ENCODE measurements at regions of chr6 and their contacts with region 1.

Region 1: GRCh38 chr6:108052706-108053105 is 21.8 kb downstream of the OSTM1 start:
- DNase-seq: no peak
- ATAC-seq: no peak
- H3K4me3 Mint-ChIP-seq: no peak overlapping the region
- H3K27ac Mint-ChIP-seq: no peak overlapping the region
- H3K4me1 Mint-ChIP-seq: no peaks in the 10 kb centered on the region
- H3K27me3 Mint-ChIP-seq: no peaks in the 10 kb centered on the region
- CTCF ChIP-seq: no peak

Region 2: DNA sequence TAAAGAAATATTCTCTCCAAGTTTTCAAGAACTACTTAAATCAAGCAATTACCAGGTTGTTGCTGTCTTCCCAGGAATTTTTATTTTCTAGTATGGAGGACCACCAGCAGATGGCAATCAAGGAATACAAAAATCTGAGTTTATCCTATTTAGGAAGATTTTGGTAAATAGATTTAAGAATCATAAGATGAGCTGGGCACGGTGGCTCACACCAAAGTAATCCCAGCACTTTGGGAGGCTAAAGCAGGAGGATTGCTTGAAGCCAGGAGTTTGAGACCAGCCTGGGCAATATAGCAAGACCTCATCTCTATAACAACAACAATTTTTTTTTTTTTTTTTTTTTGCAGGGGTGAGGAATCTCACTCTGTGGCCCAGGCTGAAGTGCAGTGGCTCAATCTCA is 75.4 kb before region 1 on chr6:
- CTCF ChIA-PET with region 1: interaction called, 83 read pairs
- POLR2A ChIA-PET with region 1: no interaction called
- DNase-seq: no peak
- ATAC-seq: no peak
- H3K4me3 Mint-ChIP-seq: no peak overlapping the region
- H3K27ac Mint-ChIP-seq: no peak overlapping the region
- H3K4me1 Mint-ChIP-seq: peaks cover 13% of the 10 kb centered on the region
- H3K27me3 Mint-ChIP-seq: peaks cover 13% of the 10 kb centered on the region
- CTCF ChIP-seq: no peak; the same call in 1 of the 2 replicates

Region 3: GRCh38 chr6:107982486-107982885 is 70.2 kb before region 1 on chr6:
- CTCF ChIA-PET with region 1: interaction called, 83 read pairs
- POLR2A ChIA-PET with region 1: no interaction called
- DNase-seq: no peak
- ATAC-seq: no peak
- H3K4me3 Mint-ChIP-seq: no peak overlapping the region
- H3K27ac Mint-ChIP-seq: no peak overlapping the region
- H3K4me1 Mint-ChIP-seq: peaks cover 20% of the 10 kb centered on the region
- H3K27me3 Mint-ChIP-seq: peaks cover 61% of the 10 kb centered on the region
- CTCF ChIP-seq: no peak

Region 4: DNA sequence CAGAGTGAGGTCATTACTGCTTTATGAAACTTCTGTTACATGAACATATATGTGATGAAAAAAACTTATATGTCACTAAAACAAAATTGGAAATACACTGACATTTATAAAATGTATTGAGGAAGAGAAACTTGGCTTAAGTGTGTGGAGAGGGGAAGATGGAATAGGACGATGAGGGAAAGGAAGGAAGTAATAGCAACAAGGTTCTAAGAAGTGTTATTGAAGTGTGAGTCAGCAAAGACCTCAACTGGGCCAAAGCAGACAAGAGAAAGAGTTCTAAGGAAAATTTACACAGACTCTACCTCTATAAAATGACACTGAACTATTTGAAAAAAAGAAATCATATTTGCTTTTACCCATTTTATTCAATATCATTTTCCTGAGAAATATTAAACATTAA is 169.8 kb after region 1 on chr6:
- CTCF ChIA-PET with region 1: no interaction called
- POLR2A ChIA-PET with region 1: no interaction called
- DNase-seq: no peak
- ATAC-seq: no peak
- H3K4me3 Mint-ChIP-seq: no peak overlapping the region
- H3K27ac Mint-ChIP-seq: peak overlapping the region; percentile 50; the same call in 1 of the 2 replicates
- H3K4me1 Mint-ChIP-seq: peaks cover 15% of the 10 kb centered on the region
- H3K27me3 Mint-ChIP-seq: no peaks in the 10 kb centered on the region
- CTCF ChIP-seq: no peak

Measured in WTC11 (cell line).